ENCODE measurements at regions of chr11 and their contacts with region 1.

Region 1: DNA sequence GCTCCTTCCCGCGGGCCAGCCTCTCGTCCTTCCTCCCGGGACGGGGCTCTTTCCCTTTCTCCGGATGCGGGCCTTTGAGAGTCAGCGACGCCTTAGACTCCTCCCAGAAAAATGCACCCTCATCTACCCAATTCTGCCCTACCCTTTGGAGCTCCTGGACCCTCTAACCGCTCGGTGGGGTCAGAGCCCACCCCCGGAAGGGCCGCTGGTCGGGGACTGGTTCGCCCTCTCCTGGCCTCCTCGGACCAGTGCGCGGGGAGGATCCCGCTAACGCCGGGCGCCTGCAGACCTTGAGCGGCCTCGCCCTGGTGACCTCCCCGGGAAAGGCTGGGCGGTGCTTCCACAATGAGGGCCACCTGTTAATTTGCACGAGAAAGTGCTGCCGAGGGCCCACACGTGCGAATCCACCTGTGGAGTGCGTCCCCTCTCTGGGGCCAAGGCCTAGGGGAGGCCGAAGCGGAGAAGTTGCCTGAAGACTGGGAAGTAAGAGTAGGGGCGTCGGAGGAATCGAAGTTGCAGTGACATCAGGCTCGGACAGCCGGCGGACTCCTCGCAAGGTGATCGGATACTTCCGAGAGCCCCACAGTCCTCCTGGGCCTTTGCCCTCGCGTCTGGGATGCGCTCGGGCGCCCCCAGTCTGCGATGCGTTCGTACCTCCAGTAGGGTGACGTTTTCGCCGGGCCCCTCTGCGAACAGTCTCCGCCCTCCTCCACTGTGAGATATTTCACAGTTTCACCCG is 61.5 kb downstream of the ENDOD1 start:
- DNase-seq: peak; percentile 92
- ATAC-seq: peak; percentile 76
- H3K4me3 ChIP-seq: peak overlapping the region; percentile 63 to 66
- H3K27ac ChIP-seq: peak overlapping the region; percentile 90
- H3K4me1 ChIP-seq: peaks cover 32 to 55% of the 10 kb centered on the region in 2 experiments
- H3K27me3 ChIP-seq: no peaks in the 10 kb centered on the region
- CTCF ChIP-seq: peak; percentile 56 to 97 (median 76)
- POLR2A ChIP-seq: peak; percentile 47
- RAD21 ChIP-seq: peak; percentile 92

Region 2: GRCh38 chr11:94767761-94768601 is 383.1 kb before region 1 on chr11 and contains the start of gene AMOTL1:
- CTCF ChIA-PET with region 1: no interaction called
- POLR2A ChIA-PET with region 1: no interaction called
- RAD21 ChIA-PET with region 1: no interaction called
- intact Hi-C with region 1: loop called (anchors 10 kb)
- DNase-seq: peak; percentile 65
- ATAC-seq: peak; percentile 89
- H3K4me3 ChIP-seq: peak within 1 kb of the TSS; percentile 61 to 67
- H3K27ac ChIP-seq: peak within 1 kb of the TSS; percentile 68
- H3K4me1 ChIP-seq: peaks cover 5 to 23% of the 10 kb centered on the region in 2 experiments; a peak in 3 of 4 replicates
- H3K27me3 ChIP-seq: no peaks in the 10 kb centered on the region
- CTCF ChIP-seq: no peak
- POLR2A ChIP-seq: peak; percentile 21
- RAD21 ChIP-seq: peak; percentile 27; the same call in 1 of the 2 replicates
- total RNA-seq, gene AMOTL1: 27.6 TPM

Region 3: GRCh38 chr11:95067039-95067840 is 83.9 kb before region 1 on chr11:
- CTCF ChIA-PET with region 1: interaction called, 15 read pairs
- POLR2A ChIA-PET with region 1: interaction called, 36 read pairs
- RAD21 ChIA-PET with region 1: interaction called, 3 read pairs
- intact Hi-C with region 1: loop called (anchors 1 kb)
- DNase-seq: no peak
- ATAC-seq: peak; percentile 75
- H3K4me3 ChIP-seq: peak overlapping the region; percentile 69 to 84
- H3K27ac ChIP-seq: peak overlapping the region; percentile 96
- H3K4me1 ChIP-seq: peaks cover 14 to 16% of the 10 kb centered on the region in 2 experiments
- H3K27me3 ChIP-seq: no peaks in the 10 kb centered on the region
- CTCF ChIP-seq: peak; percentile 21 to 43 (median 39); a peak in 4 of 6 replicates
- POLR2A ChIP-seq: peak; percentile 80
- RAD21 ChIP-seq: peak; percentile 27

Region 4: GRCh38 chr11:95705485-95706124 is 554.5 kb after region 1 on chr11:
- CTCF ChIA-PET with region 1: interaction called, 127 read pairs
- POLR2A ChIA-PET with region 1: interaction called, 3 read pairs
- RAD21 ChIA-PET with region 1: interaction called, 12 to 15 read pairs
- intact Hi-C with region 1: loop called (anchors 1 kb)
- DNase-seq: peak; percentile 82
- ATAC-seq: peak; percentile 98
- H3K4me3 ChIP-seq: no peak overlapping the region
- H3K27ac ChIP-seq: no peak overlapping the region
- H3K4me1 ChIP-seq: 0 out of 4 replicates have a peak, but pooled peaks cover 0 to 3% of the 10 kb centered on the region in 2 experiments
- H3K27me3 ChIP-seq: peaks cover 19% of the 10 kb centered on the region
- CTCF ChIP-seq: peak; percentile 92 to 97 (median 94)
- POLR2A ChIP-seq: no peak
- RAD21 ChIP-seq: peak; percentile 95

Region 5: DNA sequence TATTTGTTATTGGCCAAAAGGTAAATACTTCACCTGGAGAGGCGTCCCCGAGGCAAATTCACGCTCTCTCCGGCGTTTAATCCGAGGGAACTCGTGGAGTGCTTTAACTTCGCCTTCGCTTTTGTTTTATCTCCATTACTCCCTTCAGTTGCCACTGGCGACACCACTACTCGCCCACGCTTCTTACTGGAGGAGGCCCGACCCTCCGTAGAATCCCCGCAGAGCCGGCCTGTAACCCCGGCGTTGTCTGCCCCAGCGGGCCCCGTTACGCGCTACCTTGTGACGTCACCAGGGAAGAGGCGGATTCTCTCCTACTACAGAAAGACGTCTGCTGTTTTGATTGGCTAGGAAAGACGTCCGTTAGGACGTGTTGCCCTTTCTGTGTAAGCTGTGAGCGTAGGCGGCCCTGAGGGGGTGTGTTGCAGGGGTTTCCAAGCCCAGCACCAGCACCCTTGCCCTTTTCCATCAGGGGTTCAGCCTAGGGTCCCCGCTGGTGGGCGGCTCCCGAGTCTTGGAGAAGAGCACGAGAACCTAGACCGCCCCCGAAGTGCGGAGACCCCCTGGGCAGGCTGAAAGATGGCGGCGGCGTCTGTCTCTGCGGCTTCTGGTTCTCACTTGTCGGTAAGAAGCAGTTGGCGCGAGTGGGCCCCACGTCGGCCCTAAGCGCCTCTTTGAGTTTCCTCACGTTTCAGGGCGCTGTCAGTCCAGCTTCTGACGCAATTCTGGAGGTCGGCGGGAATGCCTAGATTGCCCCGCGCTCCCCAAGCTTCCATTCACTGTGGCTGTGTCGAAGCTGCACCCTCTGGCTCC is 639.2 kb after region 1 on chr11 and contains the start of gene CEP57:
- CTCF ChIA-PET with region 1: interaction called, 5 read pairs
- POLR2A ChIA-PET with region 1: interaction called, 3 read pairs
- RAD21 ChIA-PET with region 1: no interaction called
- intact Hi-C with region 1: loop called (anchors 1 kb)
- DNase-seq: peak; percentile 97
- ATAC-seq: peak; percentile 78
- H3K4me3 ChIP-seq: peak within 1 kb of the TSS; percentile 76 to 87
- H3K27ac ChIP-seq: peak within 1 kb of the TSS; percentile 77
- H3K4me1 ChIP-seq: peaks cover 9 to 18% of the 10 kb centered on the region in 2 experiments; a peak in 3 of 4 replicates
- H3K27me3 ChIP-seq: no peaks in the 10 kb centered on the region
- CTCF ChIP-seq: no peak
- POLR2A ChIP-seq: peak; percentile 73
- RAD21 ChIP-seq: no peak
- total RNA-seq, gene CEP57: 43.3 TPM

Region 6: DNA sequence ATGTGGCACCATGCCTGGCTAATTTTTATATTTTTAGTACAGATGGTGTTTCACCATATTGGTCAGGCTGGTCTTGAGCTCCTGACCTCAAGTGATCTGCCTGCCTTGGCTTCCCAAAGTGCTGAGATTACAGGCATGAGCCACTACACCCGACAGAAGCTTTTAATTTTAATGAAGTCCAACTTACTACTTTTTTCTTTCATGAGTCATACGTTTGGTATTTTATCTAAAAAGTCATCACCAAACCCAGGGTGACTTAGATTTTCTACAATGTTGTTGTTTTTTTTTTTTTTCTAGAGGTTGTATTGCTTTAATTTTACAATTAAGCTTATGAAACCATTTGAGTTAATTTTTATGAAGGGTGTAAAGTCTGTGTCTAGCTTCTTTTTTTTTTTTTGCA is 1273.6 kb after region 1 on chr11:
- CTCF ChIA-PET with region 1: interaction called, 16 read pairs
- POLR2A ChIA-PET with region 1: no interaction called
- RAD21 ChIA-PET with region 1: interaction called, 3 to 5 read pairs
- intact Hi-C with region 1: loop called (anchors 1 kb)
- DNase-seq: no peak
- ATAC-seq: no peak
- H3K4me3 ChIP-seq: no peak overlapping the region
- H3K27ac ChIP-seq: no peak overlapping the region
- H3K4me1 ChIP-seq: 0 out of 4 replicates have a peak, but pooled peaks cover 0 to 3% of the 10 kb centered on the region in 2 experiments
- H3K27me3 ChIP-seq: no peaks in the 10 kb centered on the region
- CTCF ChIP-seq: no peak
- POLR2A ChIP-seq: no peak
- RAD21 ChIP-seq: no peak

Measured in HCT116 (cell line).